Activated CD8-positive, alpha-beta memory T cell treated with anti-CD3 and anti-CD28 coated beads, Interleukin-2, amount 10 ng/mL, durations not matched to agents 7 days and 5 days (primary cell): ENCODE measurements at regions of chr2 and their contacts with region 1.

Region 1: GRCh38 chr2:239275044-239275685 is 125.7 kb downstream of the HDAC4 start:
- DNase-seq: peak; percentile 94
- ATAC-seq: peak; percentile 93
- H3K4me3 Mint-ChIP-seq: peak overlapping the region; percentile 62
- H3K27ac Mint-ChIP-seq: peak overlapping the region; percentile 98
- H3K4me1 Mint-ChIP-seq: peaks cover 73% of the 10 kb centered on the region
- H3K27me3 Mint-ChIP-seq: peaks cover 7% of the 10 kb centered on the region

Region 2: GRCh38 chr2:239288951-239289511 is 13.9 kb after region 1 on chr2:
- CTCF ChIA-PET with region 1: interaction called, 24 read pairs
- DNase-seq: peak; percentile 79
- ATAC-seq: peak; percentile 76
- H3K4me3 Mint-ChIP-seq: peak overlapping the region; percentile 73
- H3K27ac Mint-ChIP-seq: peak overlapping the region; percentile 100
- H3K4me1 Mint-ChIP-seq: peaks cover 76% of the 10 kb centered on the region
- H3K27me3 Mint-ChIP-seq: peaks cover 5% of the 10 kb centered on the region

Region 3: GRCh38 chr2:239303711-239304532 is 28.8 kb after region 1 on chr2:
- CTCF ChIA-PET with region 1: interaction called, 11 read pairs
- DNase-seq: peak; percentile 66
- ATAC-seq: peak; percentile 92
- H3K4me3 Mint-ChIP-seq: peak overlapping the region; percentile 36
- H3K27ac Mint-ChIP-seq: peak overlapping the region; percentile 80
- H3K4me1 Mint-ChIP-seq: peaks cover 46% of the 10 kb centered on the region
- H3K27me3 Mint-ChIP-seq: no peaks in the 10 kb centered on the region

Region 4: DNA sequence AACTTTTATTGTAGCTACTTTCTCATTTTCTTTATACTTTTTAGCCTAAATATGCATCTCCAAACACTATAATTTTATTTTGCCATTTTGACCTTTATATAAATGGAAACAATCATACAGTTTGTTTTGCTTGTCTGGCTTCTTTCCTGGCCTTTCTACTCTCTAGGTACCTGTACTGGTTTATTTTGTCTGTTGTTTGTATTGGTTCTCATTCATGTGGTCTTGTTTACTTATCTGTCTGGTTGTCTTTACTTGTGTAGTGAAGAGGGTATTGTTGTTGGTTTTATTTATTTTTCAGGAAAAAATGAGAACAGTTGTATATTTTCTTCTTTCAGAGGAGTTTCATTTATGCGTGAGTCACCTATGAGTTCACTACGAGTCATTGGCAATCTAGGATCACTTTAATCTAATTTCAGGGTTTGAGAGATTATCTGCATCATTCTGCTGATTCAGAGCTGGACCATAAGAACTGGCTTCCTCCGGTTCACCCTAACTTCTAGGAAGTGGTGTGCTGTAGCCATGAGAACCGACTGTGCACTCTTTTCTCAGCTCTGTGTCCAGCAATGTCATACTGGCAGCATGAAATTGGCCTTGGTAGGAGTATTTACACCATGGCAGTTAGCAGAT is 158.7 kb after region 1 on chr2:
- CTCF ChIA-PET with region 1: no interaction called
- DNase-seq: no peak
- ATAC-seq: peak; percentile 33
- H3K4me3 Mint-ChIP-seq: no peak overlapping the region
- H3K27ac Mint-ChIP-seq: no peak overlapping the region
- H3K4me1 Mint-ChIP-seq: peaks cover 9% of the 10 kb centered on the region
- H3K27me3 Mint-ChIP-seq: peaks cover 26% of the 10 kb centered on the region